Prostate gland (tissue), 2 donors: ENCODE measurements at regions of chr20 and their contacts with region 1.

Region 1: GRCh38 chr20:34069341-34070078 is 42.5 kb downstream of the EIF2S2 start:
- DNase-seq: peak; percentile 79
- H3K4me3 ChIP-seq: no peak overlapping the region
- H3K27ac ChIP-seq: no peak overlapping the region
- H3K4me1 ChIP-seq: no peaks in the 10 kb centered on the region
- H3K27me3 ChIP-seq: no peaks in the 10 kb centered on the region
- CTCF ChIP-seq: peak; percentile 60 to 90 (median 86)
- POLR2A ChIP-seq: no peak

Region 2: GRCh38 chr20:33862709-33863403 is 206.7 kb before region 1 on chr20:
- intact Hi-C with region 1: loop called (anchors 2 kb)
- DNase-seq: peak; percentile 19
- H3K4me3 ChIP-seq: no peak overlapping the region
- H3K27ac ChIP-seq: no peak overlapping the region
- H3K4me1 ChIP-seq: no peaks in the 10 kb centered on the region
- H3K27me3 ChIP-seq: no peaks in the 10 kb centered on the region
- CTCF ChIP-seq: peak; percentile 35 to 67 (median 59)
- POLR2A ChIP-seq: no peak

Region 3: DNA sequence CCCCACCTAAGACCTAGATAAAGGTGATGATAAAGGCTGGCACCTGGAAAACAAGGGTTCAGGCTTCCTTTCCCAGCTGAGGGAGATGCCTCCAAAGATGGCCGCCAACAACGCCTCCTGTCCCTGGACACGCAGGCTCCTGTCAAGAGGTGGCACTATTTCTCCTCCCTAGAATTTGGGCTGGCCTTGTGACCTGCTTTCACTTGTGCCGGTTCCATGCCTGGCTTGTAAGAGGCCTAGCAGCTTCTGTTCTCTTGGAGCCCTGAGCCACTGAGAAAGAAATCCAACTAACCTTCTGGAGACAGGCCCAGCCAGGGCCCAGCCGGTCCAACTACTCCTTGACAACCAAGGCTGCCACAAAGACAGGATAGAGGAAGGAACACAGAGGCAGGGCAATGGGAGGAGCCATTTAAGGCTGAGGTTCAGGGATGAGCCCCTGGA is 136.0 kb before region 1 on chr20:
- intact Hi-C with region 1: loop called (anchors 5 kb)
- DNase-seq: peak; percentile 46
- H3K4me3 ChIP-seq: no peak overlapping the region
- H3K27ac ChIP-seq: peak overlapping the region in 1 of 2 donors; percentile 35
- H3K4me1 ChIP-seq: no peaks in the 10 kb centered on the region
- H3K27me3 ChIP-seq: no peaks in the 10 kb centered on the region
- CTCF ChIP-seq: peak in 3 of 4 experiments; percentile 26 to 56 (median 48)
- POLR2A ChIP-seq: no peak

Region 4: DNA sequence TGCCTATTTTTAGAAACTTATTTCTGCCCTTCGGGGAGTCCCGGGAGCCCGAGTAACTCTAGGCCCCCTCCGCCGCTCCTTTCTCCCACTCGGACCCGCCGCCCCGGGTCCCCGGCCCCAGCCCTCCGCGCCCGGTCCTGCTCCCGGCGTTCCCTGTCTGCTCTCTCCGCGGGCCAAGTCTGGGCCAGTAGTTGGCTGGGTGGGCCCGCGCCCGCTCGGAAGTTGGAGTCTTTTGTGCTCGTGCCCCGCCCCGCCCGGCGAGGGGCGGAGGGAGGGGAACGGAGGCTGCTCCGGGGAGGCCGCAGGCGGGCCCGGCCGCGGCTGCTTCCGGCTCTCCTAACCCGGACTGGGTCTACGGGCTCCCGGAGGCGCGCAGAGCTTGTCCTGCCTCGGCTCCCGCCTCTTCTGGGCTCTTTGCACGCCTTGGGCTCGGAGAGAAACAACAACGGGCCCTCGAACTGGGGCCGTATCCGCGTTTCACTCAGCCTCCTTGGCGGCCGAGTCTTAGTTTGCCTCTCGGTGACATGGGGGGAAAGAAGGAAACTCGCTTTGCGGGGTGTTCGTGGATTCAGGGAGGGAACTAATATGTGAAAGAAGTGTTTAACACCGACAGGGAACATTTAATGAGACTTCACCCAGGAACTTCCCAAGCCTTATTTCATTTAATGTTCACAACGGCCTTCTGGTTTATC is 75.1 kb before region 1 on chr20:
- intact Hi-C with region 1: loop called (anchors 5 kb)
- DNase-seq: peak; percentile 80
- H3K4me3 ChIP-seq: peak overlapping the region; percentile 89 to 94
- H3K27ac ChIP-seq: peak overlapping the region; percentile 94 to 97
- H3K4me1 ChIP-seq: peaks cover 15% of the 10 kb centered on the region
- H3K27me3 ChIP-seq: no peaks in the 10 kb centered on the region
- CTCF ChIP-seq: no peak
- POLR2A ChIP-seq: peak; percentile 31

Region 5: GRCh38 chr20:34129518-34130162 is 60.1 kb after region 1 on chr20:
- intact Hi-C with region 1: loop called (anchors 5 kb)
- DNase-seq: peak; percentile 72
- H3K4me3 ChIP-seq: no peak overlapping the region
- H3K27ac ChIP-seq: no peak overlapping the region
- H3K4me1 ChIP-seq: no peaks in the 10 kb centered on the region
- H3K27me3 ChIP-seq: no peaks in the 10 kb centered on the region
- CTCF ChIP-seq: peak; percentile 48 to 90 (median 89)
- POLR2A ChIP-seq: no peak

Region 6: DNA sequence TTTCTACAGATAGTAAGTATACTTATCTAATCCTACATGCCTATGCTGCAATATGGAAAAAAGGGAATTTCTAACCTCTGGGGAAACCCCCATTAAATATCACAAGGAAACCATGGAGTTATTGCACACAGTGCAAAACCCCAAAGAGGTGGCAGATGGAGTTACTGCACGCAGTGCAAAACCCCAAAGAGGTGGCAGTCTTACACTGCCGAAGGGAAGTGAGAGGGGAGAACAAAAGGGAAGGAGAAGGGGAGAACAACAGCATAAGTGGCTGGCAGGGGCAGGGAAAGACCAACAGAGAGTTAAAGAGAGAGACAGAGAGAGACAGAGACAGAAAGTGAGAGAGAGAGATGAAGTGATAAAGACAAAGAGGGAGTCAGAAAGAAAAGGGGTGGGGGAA is 86.3 kb after region 1 on chr20:
- intact Hi-C with region 1: no loop called
- DNase-seq: no peak
- H3K4me3 ChIP-seq: no peak overlapping the region
- H3K27ac ChIP-seq: no peak overlapping the region
- H3K4me1 ChIP-seq: no peaks in the 10 kb centered on the region
- H3K27me3 ChIP-seq: no peaks in the 10 kb centered on the region
- CTCF ChIP-seq: no peak
- POLR2A ChIP-seq: no peak